CD8-positive, alpha-beta T cell (primary cell): ENCODE measurements at regions of chr9 and their contacts with region 1.

Region 1: GRCh38 chr9:35726881-35727438 is 5.0 kb downstream of the TLN1 start:
- DNase-seq: peak in 8 of 9 experiments; percentile 21 to 76 (median 55)
- ATAC-seq: peak; percentile 78
- H3K4me3 ChIP-seq: no peak overlapping the region
- H3K4me3 Mint-ChIP-seq: no peak overlapping the region
- H3K27ac ChIP-seq: peak overlapping the region in 1 of 2 experiments; percentile 57
- H3K27ac Mint-ChIP-seq: no peak overlapping the region
- H3K4me1 ChIP-seq: peaks cover 53% of the 10 kb centered on the region
- H3K4me1 Mint-ChIP-seq: peaks cover 13% of the 10 kb centered on the region
- H3K27me3 ChIP-seq: no peaks in the 10 kb centered on the region
- H3K27me3 Mint-ChIP-seq: no peaks in the 10 kb centered on the region
- CTCF ChIP-seq: peak; percentile 17

Region 2: GRCh38 chr9:35748858-35749514 is 22.0 kb after region 1 on chr9 and contains the starts of genes GBA2 and RGP1:
- CTCF ChIA-PET with region 1: interaction called, 10 read pairs
- POLR2A ChIA-PET with region 1: interaction called, 38 read pairs
- intact Hi-C with region 1: loop called (anchors 1 kb)
- DNase-seq: peak in 8 of 9 experiments; percentile 50 to 80 (median 66)
- ATAC-seq: peak; percentile 66
- H3K4me3 ChIP-seq: peak within 1 kb of the TSS; percentile 80 to 91
- H3K4me3 Mint-ChIP-seq: peak within 1 kb of the TSS; percentile 98
- H3K27ac ChIP-seq: peak within 1 kb of the TSS; percentile 68 to 86
- H3K27ac Mint-ChIP-seq: peak within 1 kb of the TSS; percentile 94
- H3K4me1 ChIP-seq: peaks cover 41% of the 10 kb centered on the region
- H3K4me1 Mint-ChIP-seq: peaks cover 50% of the 10 kb centered on the region
- H3K27me3 ChIP-seq: no peaks in the 10 kb centered on the region
- H3K27me3 Mint-ChIP-seq: no peaks in the 10 kb centered on the region
- CTCF ChIP-seq: no peak
- total RNA-seq, gene GBA2: 14.1 to 14.3 TPM
- total RNA-seq, gene RGP1: 9.6 to 10.4 TPM